ENCODE measurements at regions of chr9 and their contacts with region 1.

Region 1: DNA sequence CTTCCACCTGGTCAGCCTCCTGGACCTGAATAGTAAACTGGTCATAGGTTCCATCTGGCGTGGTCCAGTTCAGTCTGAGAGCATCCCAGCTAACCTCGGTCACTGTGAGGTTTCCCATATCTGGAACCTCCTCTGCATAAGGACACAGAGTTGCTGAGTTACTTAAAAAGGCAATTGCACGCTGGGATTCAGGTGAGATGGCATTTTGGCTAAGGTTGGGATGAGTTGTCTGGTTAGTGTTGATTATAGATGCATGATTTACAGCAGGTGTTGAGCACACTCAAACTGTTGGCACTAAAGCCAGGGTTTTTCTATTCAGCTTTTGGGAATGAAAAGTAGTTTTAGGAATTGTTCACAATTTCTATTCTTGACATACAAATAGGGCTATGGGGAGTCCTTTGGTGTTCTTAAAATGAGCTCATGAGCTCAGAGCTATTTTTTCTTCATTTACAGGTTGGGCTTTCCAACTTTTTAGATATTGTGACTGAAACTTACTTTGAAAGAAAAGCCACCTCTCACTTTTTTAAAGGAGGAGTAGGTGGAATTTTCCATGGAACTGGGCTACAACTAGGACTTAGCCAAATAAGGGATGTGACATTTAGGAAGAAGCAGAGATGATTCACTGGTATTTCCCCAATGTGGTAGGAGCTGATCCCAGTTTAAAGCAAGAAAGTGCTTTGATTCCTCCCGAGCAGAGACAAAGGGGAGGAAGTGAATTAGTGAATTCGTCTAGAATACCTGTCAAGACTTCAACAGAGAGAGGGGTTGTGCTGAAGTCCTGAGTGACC is 54.7 kb downstream of the TNC start:
- DNase-seq: no peak
- H3K4me3 ChIP-seq: no peak overlapping the region
- H3K27ac ChIP-seq: peak overlapping the region; percentile 50 to 68
- H3K4me1 ChIP-seq: peaks cover 14 to 28% of the 10 kb centered on the region in 2 donors
- H3K27me3 ChIP-seq: no peaks in the 10 kb centered on the region
- CTCF ChIP-seq: no peak

Region 2: GRCh38 chr9:113410207-113410864 is 1652.9 kb before region 1 on chr9 and contains the starts of genes C9orf43 and POLE3:
- intact Hi-C with region 1: no loop called
- DNase-seq: peak; percentile 78 to 97
- H3K4me3 ChIP-seq: peak within 1 kb of the TSS; percentile 79 to 82
- H3K27ac ChIP-seq: peak within 1 kb of the TSS; percentile 96 to 98
- H3K4me1 ChIP-seq: peaks cover 3 to 8% of the 10 kb centered on the region in 2 donors
- H3K27me3 ChIP-seq: no peaks in the 10 kb centered on the region
- CTCF ChIP-seq: peak in 1 of 3 experiments; percentile 2
- total RNA-seq, gene C9orf43: not detected
- total RNA-seq, gene POLE3: 17.5 TPM

Region 3: DNA sequence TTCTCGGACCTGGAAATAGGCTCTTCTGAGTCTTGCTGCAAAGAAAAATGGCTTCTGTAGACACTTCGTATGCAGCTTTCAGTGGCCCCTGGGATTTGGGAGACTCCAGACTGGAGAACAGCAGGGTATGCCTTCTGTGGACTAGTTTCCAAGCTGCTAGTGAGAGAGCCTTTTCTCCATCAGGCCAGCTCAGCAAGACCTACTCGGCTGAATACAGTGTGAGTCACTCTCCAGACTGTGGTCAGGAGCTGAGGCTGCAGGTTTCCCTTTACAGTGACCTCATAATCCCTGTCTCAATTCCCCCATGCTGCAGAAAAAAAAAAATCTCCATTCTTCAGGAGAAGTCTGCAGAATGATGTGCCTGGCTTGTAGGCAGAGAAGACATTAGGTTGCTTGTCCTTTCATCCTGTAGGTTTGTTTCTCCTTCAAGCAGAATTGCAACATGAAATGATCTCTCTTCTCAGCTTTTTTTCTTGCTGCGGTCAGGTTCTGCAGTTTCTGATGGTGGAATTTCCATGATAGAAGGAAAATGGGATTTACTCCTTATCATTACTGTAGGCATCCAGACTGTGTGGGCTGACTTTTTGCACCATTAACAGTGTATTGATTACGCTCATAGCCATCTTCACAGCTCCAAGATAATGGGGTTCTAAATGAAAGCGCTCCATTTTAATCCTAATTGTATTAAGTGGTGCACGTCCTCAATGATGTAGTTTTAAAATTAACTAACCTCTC is 54.5 kb before region 1 on chr9:
- intact Hi-C with region 1: no loop called
- DNase-seq: no peak
- H3K4me3 ChIP-seq: no peak overlapping the region
- H3K27ac ChIP-seq: no peak overlapping the region
- H3K4me1 ChIP-seq: no peaks in the 10 kb centered on the region
- H3K27me3 ChIP-seq: no peaks in the 10 kb centered on the region
- CTCF ChIP-seq: no peak

Region 4: GRCh38 chr9:115035841-115036612 is 27.2 kb before region 1 on chr9:
- intact Hi-C with region 1: loop called (anchors 2 kb)
- DNase-seq: peak in 1 of 2 donors; percentile 76
- H3K4me3 ChIP-seq: no peak overlapping the region
- H3K27ac ChIP-seq: peak overlapping the region; percentile 91 to 93
- H3K4me1 ChIP-seq: peaks cover 16 to 34% of the 10 kb centered on the region in 2 donors
- H3K27me3 ChIP-seq: no peaks in the 10 kb centered on the region
- CTCF ChIP-seq: no peak

Measured in ascending aorta (tissue), 2 donors.